HepG2 (cell line): ENCODE measurements at regions of chr12 and their contacts with region 1.

Region 1: GRCh38 chr12:46675736-46676135 is 150.1 kb downstream of the SLC38A4 start:
- DNase-seq: peak; percentile 30
- ATAC-seq: no peak
- H3K4me3 ChIP-seq: no peak overlapping the region
- H3K27ac ChIP-seq: no peak overlapping the region
- H3K4me1 ChIP-seq: peaks cover 26% of the 10 kb centered on the region
- H3K27me3 ChIP-seq: no peaks in the 10 kb centered on the region
- CTCF ChIP-seq: peak; percentile 30; the same call in 1 of the 2 replicates
- EP300 ChIP-seq: no peak
- POLR2A ChIP-seq: no peak
- RAD21 ChIP-seq: peak; percentile 45

Region 2: DNA sequence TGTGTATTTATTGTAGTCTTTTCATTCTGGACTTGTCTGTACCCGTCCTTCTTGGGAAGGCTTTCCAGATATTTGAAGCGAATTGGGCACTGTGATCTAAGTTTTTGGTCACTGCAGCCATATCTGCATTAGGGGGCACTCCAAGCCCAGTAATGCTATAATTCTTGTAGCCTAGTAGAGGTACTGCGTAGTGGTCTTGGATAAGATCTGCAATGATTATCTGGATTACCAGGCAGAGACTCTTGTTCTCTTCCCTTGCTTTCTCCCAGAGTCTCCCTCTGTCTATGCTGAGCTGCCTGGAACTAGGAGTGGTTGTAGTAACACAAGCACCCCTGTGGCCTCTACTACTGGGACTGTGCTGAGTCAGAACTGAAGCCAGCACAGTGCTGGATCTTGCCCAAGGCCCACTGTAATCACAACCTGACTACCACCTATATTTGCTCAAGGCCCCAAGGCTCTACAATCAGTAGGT is 333.1 kb before region 1 on chr12:
- CTCF ChIA-PET with region 1: interaction called, 10 read pairs
- POLR2A ChIA-PET with region 1: no interaction called
- in situ Hi-C with region 1: no loop called
- intact Hi-C with region 1: loop called (anchors 1 kb)
- DNase-seq: peak; percentile 64
- ATAC-seq: peak; percentile 99
- H3K4me3 ChIP-seq: peak overlapping the region in 1 of 3 experiments; percentile 27; a peak in 2 of 6 replicates
- H3K27ac ChIP-seq: no peak overlapping the region
- H3K4me1 ChIP-seq: peaks cover 14% of the 10 kb centered on the region
- H3K27me3 ChIP-seq: no peaks in the 10 kb centered on the region
- CTCF ChIP-seq: peak; percentile 89
- EP300 ChIP-seq: no peak
- POLR2A ChIP-seq: no peak
- RAD21 ChIP-seq: peak; percentile 87

Region 3: DNA sequence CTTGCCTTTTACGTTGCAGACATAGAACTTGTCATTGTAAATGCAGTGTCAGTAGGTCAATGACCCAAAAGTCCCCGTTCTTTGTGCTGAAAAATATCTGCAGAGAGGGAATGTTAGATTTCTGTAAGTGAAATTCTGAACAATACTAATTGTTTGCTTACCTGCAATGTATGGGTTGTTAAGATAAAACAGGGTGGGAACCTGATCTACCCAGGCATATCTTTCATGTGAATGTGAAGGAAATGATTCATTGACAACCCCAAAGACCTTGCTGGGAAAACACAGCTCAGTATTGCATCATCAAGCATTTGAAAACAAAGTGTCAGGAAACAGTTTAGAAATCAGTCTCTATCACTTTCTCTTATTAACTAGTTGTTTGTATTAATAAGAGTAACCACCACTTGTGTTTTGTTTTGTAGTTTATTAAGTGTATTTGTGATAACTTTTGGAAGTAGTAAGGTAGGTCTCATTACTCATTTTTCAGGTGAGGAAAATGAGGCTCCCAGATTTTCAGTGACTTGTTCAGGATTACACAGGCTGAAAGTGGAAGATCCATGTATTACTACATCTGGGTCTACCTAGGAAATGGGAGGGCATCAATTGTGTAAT is 245.3 kb before region 1 on chr12:
- CTCF ChIA-PET with region 1: no interaction called
- POLR2A ChIA-PET with region 1: no interaction called
- in situ Hi-C with region 1: no loop called
- intact Hi-C with region 1: loop called (anchors 5 kb)
- DNase-seq: peak; percentile 95
- ATAC-seq: peak; percentile 90
- H3K4me3 ChIP-seq: peak overlapping the region in 1 of 3 experiments; percentile 2; a peak in 2 of 6 replicates
- H3K27ac ChIP-seq: peak overlapping the region; percentile 58
- H3K4me1 ChIP-seq: peaks cover 37% of the 10 kb centered on the region
- H3K27me3 ChIP-seq: no peaks in the 10 kb centered on the region
- CTCF ChIP-seq: no peak
- EP300 ChIP-seq: peak in 1 of 2 experiments; percentile 92; a peak in 2 of 4 replicates
- POLR2A ChIP-seq: no peak
- RAD21 ChIP-seq: no peak

Region 4: DNA sequence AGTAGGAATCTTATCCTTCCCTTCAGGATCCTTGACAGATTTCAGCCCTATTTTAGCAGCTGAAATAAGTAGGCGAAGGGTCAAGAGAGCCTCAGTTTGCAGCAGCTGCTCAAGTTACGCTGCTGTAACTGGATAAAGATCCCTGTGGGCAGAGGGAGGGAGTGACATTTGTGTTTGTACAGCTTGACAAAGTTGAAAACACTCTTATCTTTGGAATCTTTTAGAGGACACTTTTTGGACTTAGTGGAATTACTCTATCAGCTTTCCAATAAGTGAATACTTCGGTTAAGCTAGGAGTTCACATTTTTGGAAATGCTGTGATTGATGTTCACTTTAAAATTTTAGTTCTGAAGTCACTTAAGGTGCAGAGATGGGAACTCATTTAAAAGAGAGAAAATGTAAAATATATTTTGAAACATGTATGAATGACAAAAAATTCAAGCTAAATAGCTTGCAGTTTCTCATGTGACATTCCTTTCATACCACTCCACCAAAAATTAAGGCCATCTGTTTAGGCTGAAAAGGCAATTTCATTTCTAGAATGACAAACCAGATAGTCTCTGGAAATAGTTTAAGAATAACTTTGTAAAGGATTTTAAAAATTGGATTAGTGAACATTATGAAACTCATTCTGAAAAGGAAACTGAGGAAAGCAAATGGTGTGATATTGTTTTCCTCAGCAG is 94.9 kb after region 1 on chr12:
- CTCF ChIA-PET with region 1: no interaction called
- POLR2A ChIA-PET with region 1: no interaction called
- in situ Hi-C with region 1: no loop called
- intact Hi-C with region 1: no loop called
- DNase-seq: peak; percentile 78
- ATAC-seq: peak; percentile 94
- H3K4me3 ChIP-seq: no peak overlapping the region; a peak in 1 of 6 replicates
- H3K27ac ChIP-seq: peak overlapping the region; percentile 64
- H3K4me1 ChIP-seq: peaks cover 59% of the 10 kb centered on the region
- H3K27me3 ChIP-seq: no peaks in the 10 kb centered on the region
- CTCF ChIP-seq: no peak
- EP300 ChIP-seq: peak in 1 of 2 experiments; percentile 75; a peak in 2 of 4 replicates
- POLR2A ChIP-seq: no peak
- RAD21 ChIP-seq: no peak

Region 5: GRCh38 chr12:46904406-46905238 is 228.9 kb after region 1 on chr12:
- CTCF ChIA-PET with region 1: no interaction called
- POLR2A ChIA-PET with region 1: no interaction called
- in situ Hi-C with region 1: no loop called
- intact Hi-C with region 1: no loop called
- DNase-seq: no peak
- ATAC-seq: no peak
- H3K4me3 ChIP-seq: no peak overlapping the region
- H3K27ac ChIP-seq: no peak overlapping the region
- H3K4me1 ChIP-seq: no peaks in the 10 kb centered on the region
- H3K27me3 ChIP-seq: no peaks in the 10 kb centered on the region
- CTCF ChIP-seq: no peak
- EP300 ChIP-seq: no peak
- POLR2A ChIP-seq: no peak
- RAD21 ChIP-seq: no peak

Region 6: DNA sequence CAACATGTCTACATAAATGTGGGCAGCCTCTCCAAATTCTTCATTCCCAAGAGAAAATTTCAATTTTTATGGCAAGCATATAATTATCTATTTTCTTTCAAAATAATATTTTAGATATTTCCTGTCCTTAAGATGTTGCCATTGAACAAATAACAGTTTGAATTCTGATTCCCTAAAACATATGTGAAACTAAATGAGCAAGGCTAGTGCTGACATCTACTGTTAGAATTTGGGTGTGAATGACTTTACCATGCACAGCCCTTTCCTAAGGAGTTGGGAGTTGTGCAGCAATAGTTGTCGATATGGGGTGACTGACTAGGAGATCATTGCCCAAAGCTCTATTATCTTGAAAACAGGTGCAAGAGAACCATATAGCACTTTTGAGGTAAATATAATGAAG is 258.2 kb after region 1 on chr12:
- CTCF ChIA-PET with region 1: no interaction called
- POLR2A ChIA-PET with region 1: interaction called, 3 read pairs
- in situ Hi-C with region 1: loop called (anchors 5 kb)
- intact Hi-C with region 1: loop called (anchors 1 kb)
- DNase-seq: peak; percentile 49
- ATAC-seq: peak; percentile 87
- H3K4me3 ChIP-seq: peak overlapping the region in 2 of 3 experiments; percentile 14 to 31; a peak in 4 of 6 replicates
- H3K27ac ChIP-seq: no peak overlapping the region
- H3K4me1 ChIP-seq: peaks cover 42% of the 10 kb centered on the region
- H3K27me3 ChIP-seq: no peaks in the 10 kb centered on the region
- CTCF ChIP-seq: peak; percentile 83
- EP300 ChIP-seq: no peak
- POLR2A ChIP-seq: no peak
- RAD21 ChIP-seq: peak; percentile 33; the same call in 1 of the 2 replicates

Region 7: GRCh38 chr12:47021298-47021697 is 345.6 kb after region 1 on chr12:
- CTCF ChIA-PET with region 1: interaction called, 5 read pairs
- POLR2A ChIA-PET with region 1: no interaction called
- in situ Hi-C with region 1: no loop called
- intact Hi-C with region 1: loop called (anchors 2 kb)
- DNase-seq: peak; percentile 46
- ATAC-seq: peak; percentile 54; the same call in 2 of the 3 replicates
- H3K4me3 ChIP-seq: no peak overlapping the region
- H3K27ac ChIP-seq: no peak overlapping the region
- H3K4me1 ChIP-seq: no peaks in the 10 kb centered on the region
- H3K27me3 ChIP-seq: peaks cover 1 to 7% of the 10 kb centered on the region in 2 experiments; a peak in 3 of 5 replicates
- CTCF ChIP-seq: peak; percentile 81
- EP300 ChIP-seq: no peak
- POLR2A ChIP-seq: no peak
- RAD21 ChIP-seq: peak; percentile 47; the same call in 1 of the 2 replicates